ENCODE measurements at regions of chr1 and their contacts with region 1.

Region 1: DNA sequence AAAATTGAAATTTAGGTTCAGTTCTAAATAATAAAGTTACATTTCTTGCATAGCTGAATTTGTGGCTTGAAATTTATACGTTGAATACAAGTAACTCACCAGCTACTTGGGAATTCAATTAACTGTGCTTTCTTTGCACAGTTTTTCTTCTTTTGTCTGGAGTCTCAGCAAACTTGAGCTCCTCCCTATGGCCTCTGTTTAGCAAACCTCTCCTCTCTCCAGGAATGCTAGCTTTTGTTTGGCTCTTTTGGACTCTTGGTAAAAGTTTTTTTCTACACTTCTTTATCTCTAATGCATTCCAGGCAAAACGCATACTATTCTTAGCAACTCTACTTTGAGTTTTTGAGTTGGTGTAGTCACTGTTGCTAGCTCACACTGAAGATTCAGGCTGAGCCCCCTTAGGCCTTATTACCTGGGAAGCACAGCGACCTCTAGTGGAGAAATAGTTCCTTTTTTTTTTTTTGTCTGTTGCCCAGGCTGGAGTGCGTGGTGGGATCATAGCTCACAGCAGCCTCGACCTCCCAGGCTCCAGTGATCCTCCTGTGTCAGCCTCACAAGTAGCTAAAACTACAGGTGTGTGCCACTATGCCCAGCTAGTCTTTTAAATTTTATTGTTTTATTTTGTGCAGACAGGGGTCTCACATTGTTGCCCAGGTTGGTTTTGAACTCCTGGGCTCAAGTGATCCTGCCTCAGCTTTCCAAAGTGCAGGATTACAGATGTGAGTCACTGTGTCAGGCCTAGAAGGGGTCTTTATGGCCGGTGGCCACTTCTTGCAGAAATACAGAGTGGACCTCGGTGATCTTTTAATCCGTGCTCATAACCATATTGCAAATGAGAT is 61.7 kb downstream of the CASQ2 start:
- DNase-seq: no peak
- ATAC-seq: peak; percentile 51
- H3K4me3 ChIP-seq: no peak overlapping the region
- H3K4me1 ChIP-seq: no peaks in the 10 kb centered on the region
- CTCF ChIP-seq: peak; percentile 38

Region 2: GRCh38 chr1:115609021-115609420 is 97.8 kb before region 1 on chr1:
- intact Hi-C with region 1: loop called (anchors 10 kb)
- DNase-seq: no peak
- ATAC-seq: no peak
- H3K4me3 ChIP-seq: no peak overlapping the region
- H3K4me1 ChIP-seq: no peaks in the 10 kb centered on the region
- CTCF ChIP-seq: no peak

Measured in mucosa of descending colon (tissue), 3 donors.